Heart left ventricle (tissue), 16 donors: ENCODE measurements at regions of chr7 and their contacts with region 1.

Region 1: DNA sequence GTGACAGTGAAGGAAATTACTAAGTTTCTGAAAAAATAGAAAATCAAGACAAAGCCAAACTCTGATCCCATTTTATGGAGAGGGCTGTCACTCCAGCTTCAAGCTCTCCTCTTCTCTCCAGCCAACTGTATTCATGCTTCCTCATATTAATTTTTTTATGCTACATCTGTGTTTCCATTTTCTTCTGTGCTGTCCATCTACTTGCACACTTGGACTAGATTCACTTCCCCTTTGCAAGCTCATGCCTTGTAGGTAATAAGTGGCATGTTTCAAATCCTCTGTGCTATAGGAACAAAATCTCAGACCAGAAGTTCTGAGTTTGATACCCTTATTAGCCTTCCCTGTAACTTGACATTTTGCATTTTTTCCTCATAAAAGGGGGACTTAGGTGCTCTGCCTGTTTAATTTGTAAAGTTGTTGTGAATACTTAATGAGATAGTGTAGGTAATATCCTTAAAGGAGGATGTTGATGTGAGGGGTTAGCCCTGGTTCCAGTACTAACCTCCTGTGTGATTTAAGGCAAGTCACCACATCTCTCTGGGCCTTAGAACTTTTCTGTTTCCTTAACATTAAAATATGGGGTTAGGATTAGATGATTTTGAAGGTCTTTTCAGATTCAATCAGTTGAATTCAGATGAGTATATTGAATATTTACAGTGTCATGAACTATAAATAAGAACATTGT is 358.8 kb downstream of the BBS9 start:
- DNase-seq: no peak
- ATAC-seq: no peak
- H3K4me3 ChIP-seq: no peak overlapping the region
- H3K27ac ChIP-seq: no peak overlapping the region
- H3K4me1 ChIP-seq: no peaks in the 10 kb centered on the region
- H3K27me3 ChIP-seq: no peaks in the 10 kb centered on the region
- CTCF ChIP-seq: no peak
- POLR2A ChIP-seq: no peak

Region 2: GRCh38 chr7:33547880-33548279 is 59.7 kb after region 1 on chr7:
- intact Hi-C with region 1: loop called in 1 of 10 experiments (anchors 10 kb)
- DNase-seq: no peak
- ATAC-seq: no peak
- H3K4me3 ChIP-seq: no peak overlapping the region
- H3K27ac ChIP-seq: no peak overlapping the region
- H3K4me1 ChIP-seq: peaks cover 0 to 14% (median 0%) of the 10 kb centered on the region in 12 donors
- H3K27me3 ChIP-seq: no peaks in the 10 kb centered on the region
- CTCF ChIP-seq: no peak
- POLR2A ChIP-seq: no peak

Region 3: GRCh38 chr7:33964417-33965182 is 476.5 kb after region 1 on chr7:
- intact Hi-C with region 1: no loop called
- DNase-seq: no peak
- ATAC-seq: no peak
- H3K4me3 ChIP-seq: no peak overlapping the region
- H3K27ac ChIP-seq: no peak overlapping the region
- H3K4me1 ChIP-seq: no peaks in the 10 kb centered on the region
- H3K27me3 ChIP-seq: no peaks in the 10 kb centered on the region
- CTCF ChIP-seq: no peak
- POLR2A ChIP-seq: no peak

Region 4: GRCh38 chr7:34523226-34523918 is 1035.2 kb after region 1 on chr7:
- intact Hi-C with region 1: no loop called
- DNase-seq: no peak
- ATAC-seq: no peak
- H3K4me3 ChIP-seq: no peak overlapping the region
- H3K27ac ChIP-seq: no peak overlapping the region
- H3K4me1 ChIP-seq: no peaks in the 10 kb centered on the region
- H3K27me3 ChIP-seq: no peaks in the 10 kb centered on the region
- CTCF ChIP-seq: no peak
- POLR2A ChIP-seq: no peak